CD4-positive, alpha-beta memory T cell (primary cell): ENCODE measurements at regions of chr9 and their contacts with region 1.

Region 1: DNA sequence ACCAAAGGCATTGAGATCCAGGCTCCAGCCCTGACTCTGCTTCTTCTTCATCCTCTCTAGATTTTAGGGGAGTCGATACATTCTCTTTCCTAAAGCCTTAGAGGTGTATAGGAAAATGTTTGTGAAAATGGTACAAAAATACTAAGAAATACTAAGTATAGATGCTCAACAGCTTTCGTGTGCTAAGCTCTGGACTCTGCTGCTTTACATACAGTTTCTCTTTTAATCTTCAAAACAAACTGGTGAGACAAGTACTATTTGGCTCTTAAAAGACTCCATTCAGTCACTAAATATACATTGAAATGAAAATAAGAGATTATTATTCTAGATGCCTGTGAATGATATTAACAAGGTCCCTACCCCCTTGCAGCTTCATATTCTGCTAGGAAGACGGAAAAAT is 174.5 kb upstream of the TRPM3 start:
- DNase-seq: no peak
- H3K4me3 ChIP-seq: no peak overlapping the region
- H3K4me3 Mint-ChIP-seq: no peak overlapping the region
- H3K27ac ChIP-seq: no peak overlapping the region
- H3K27ac Mint-ChIP-seq: no peak overlapping the region
- H3K4me1 ChIP-seq: no peaks in the 10 kb centered on the region
- H3K4me1 Mint-ChIP-seq: no peaks in the 10 kb centered on the region
- H3K27me3 ChIP-seq: no peaks in the 10 kb centered on the region
- H3K27me3 Mint-ChIP-seq: peaks cover 4 to 5% of the 10 kb centered on the region in 2 donors

Region 2: GRCh38 chr9:71285191-71285656 is 10.7 kb before region 1 on chr9:
- CTCF ChIA-PET with region 1: interaction called, 16 read pairs
- POLR2A ChIA-PET with region 1: no interaction called
- intact Hi-C with region 1: no loop called
- DNase-seq: peak; percentile 30 to 45 (median 36)
- H3K4me3 ChIP-seq: no peak overlapping the region
- H3K4me3 Mint-ChIP-seq: no peak overlapping the region
- H3K27ac ChIP-seq: no peak overlapping the region
- H3K27ac Mint-ChIP-seq: no peak overlapping the region
- H3K4me1 ChIP-seq: no peaks in the 10 kb centered on the region
- H3K4me1 Mint-ChIP-seq: no peaks in the 10 kb centered on the region
- H3K27me3 ChIP-seq: no peaks in the 10 kb centered on the region
- H3K27me3 Mint-ChIP-seq: peaks cover 0 to 5% of the 10 kb centered on the region in 2 donors